ENCODE measurements at regions of chr6 and their contacts with region 1.

Region 1: DNA sequence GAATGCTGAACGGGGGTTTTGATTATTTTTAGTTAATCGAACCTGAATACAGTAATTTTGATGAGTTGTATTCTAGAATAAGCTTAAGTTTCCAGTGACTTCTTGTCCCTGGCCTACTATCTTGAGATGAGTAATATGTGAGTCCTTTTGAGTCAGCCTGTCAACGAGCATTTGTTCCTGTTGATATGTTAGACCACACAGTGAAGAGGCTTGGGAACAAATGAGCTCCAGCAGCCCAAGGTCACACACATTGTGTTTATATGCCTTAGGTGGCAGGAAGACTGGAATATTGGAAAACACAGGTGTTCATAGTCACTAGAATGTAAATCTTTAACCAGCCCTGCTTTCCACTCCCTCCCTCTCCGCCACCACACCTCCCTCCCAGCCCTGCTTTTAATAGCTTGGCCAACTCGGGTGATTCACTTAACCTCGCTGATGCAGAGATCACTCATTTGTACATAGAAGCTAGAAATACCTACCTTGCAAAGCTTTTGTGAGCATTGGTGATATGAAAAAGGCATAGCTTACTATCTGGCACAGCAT is 9.1 kb downstream of the SMPDL3A start:
- DNase-seq: no peak
- ATAC-seq: peak; percentile 93
- H3K4me3 ChIP-seq: no peak overlapping the region
- H3K27ac ChIP-seq: no peak overlapping the region
- H3K4me1 ChIP-seq: no peaks in the 10 kb centered on the region
- H3K27me3 ChIP-seq: no peaks in the 10 kb centered on the region
- CTCF ChIP-seq: no peak
- EP300 ChIP-seq: peak in 1 of 2 experiments; percentile 14; a peak in 2 of 4 replicates
- POLR2A ChIP-seq: no peak
- RAD21 ChIP-seq: no peak

Region 2: DNA sequence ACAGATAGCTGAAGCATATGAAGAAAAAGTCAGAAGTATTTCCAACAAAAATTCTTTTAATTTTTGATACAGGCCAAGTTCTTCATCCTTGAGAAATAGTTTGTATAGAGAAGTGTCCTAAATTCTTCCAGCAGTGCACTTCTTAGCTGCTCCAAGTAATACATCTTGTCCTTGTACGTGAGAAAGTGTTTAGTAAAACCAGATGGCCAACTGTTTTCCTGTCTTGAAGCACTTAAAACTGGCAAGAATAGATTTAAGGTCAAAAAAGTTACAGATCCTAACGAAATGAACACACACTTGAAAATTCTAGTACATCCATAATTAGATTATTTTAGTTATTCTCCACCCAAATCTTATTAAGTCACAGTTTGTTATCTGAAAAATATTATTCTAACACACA is 450.9 kb before region 1 on chr6:
- CTCF ChIA-PET with region 1: no interaction called
- POLR2A ChIA-PET with region 1: no interaction called
- RAD21 ChIA-PET with region 1: no interaction called
- SMC1A ChIA-PET with region 1: no interaction called
- in situ Hi-C with region 1: no loop called
- intact Hi-C with region 1: no loop called
- DNase-seq: no peak
- ATAC-seq: no peak
- H3K4me3 ChIP-seq: no peak overlapping the region
- H3K27ac ChIP-seq: no peak overlapping the region
- H3K4me1 ChIP-seq: no peaks in the 10 kb centered on the region
- H3K27me3 ChIP-seq: no peaks in the 10 kb centered on the region; a peak in 1 of 4 replicates
- CTCF ChIP-seq: no peak
- EP300 ChIP-seq: no peak
- POLR2A ChIP-seq: no peak
- RAD21 ChIP-seq: no peak

Region 3: GRCh38 chr6:122692131-122692598 is 106.0 kb before region 1 on chr6:
- CTCF ChIA-PET with region 1: no interaction called
- POLR2A ChIA-PET with region 1: no interaction called
- RAD21 ChIA-PET with region 1: no interaction called
- SMC1A ChIA-PET with region 1: no interaction called
- in situ Hi-C with region 1: no loop called
- intact Hi-C with region 1: no loop called
- DNase-seq: no peak
- ATAC-seq: no peak
- H3K4me3 ChIP-seq: no peak overlapping the region
- H3K27ac ChIP-seq: no peak overlapping the region
- H3K4me1 ChIP-seq: no peaks in the 10 kb centered on the region
- H3K27me3 ChIP-seq: no peaks in the 10 kb centered on the region
- CTCF ChIP-seq: no peak
- EP300 ChIP-seq: no peak
- POLR2A ChIP-seq: no peak
- RAD21 ChIP-seq: no peak

Region 4: GRCh38 chr6:122709922-122710512 is 88.2 kb before region 1 on chr6:
- CTCF ChIA-PET with region 1: interaction called, 3 read pairs
- POLR2A ChIA-PET with region 1: no interaction called
- RAD21 ChIA-PET with region 1: no interaction called
- SMC1A ChIA-PET with region 1: interaction called, 10 read pairs
- in situ Hi-C with region 1: no loop called
- intact Hi-C with region 1: no loop called
- DNase-seq: peak; percentile 11
- ATAC-seq: peak; percentile 82
- H3K4me3 ChIP-seq: no peak overlapping the region
- H3K27ac ChIP-seq: no peak overlapping the region
- H3K4me1 ChIP-seq: no peaks in the 10 kb centered on the region
- H3K27me3 ChIP-seq: no peaks in the 10 kb centered on the region; a peak in 1 of 4 replicates
- CTCF ChIP-seq: no peak
- EP300 ChIP-seq: peak; percentile 69 to 80; a peak in 3 of 4 replicates
- POLR2A ChIP-seq: no peak
- RAD21 ChIP-seq: no peak

Region 5: DNA sequence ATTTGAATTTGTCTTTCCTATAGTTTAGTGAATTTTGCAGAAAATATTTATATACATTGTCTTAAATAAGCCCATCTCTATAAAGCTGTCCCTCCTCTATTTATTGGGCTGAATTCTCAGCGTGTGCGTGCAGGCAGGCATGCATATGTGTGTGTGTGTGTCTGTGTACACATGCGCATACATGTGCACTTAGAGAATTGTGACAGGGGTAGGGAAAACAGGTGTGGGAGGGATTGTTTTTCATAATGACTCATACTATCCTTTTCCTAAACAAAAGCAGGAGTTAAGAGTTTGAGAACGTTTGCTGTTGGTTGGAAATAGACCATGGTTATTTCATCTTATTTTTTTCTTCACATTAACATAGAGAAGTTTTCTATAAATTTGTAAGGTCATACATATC is 62.0 kb before region 1 on chr6:
- CTCF ChIA-PET with region 1: interaction called, 9 read pairs
- POLR2A ChIA-PET with region 1: no interaction called
- RAD21 ChIA-PET with region 1: interaction called, 22 read pairs
- SMC1A ChIA-PET with region 1: interaction called, 50 read pairs
- in situ Hi-C with region 1: no loop called
- intact Hi-C with region 1: no loop called
- DNase-seq: no peak
- ATAC-seq: no peak
- H3K4me3 ChIP-seq: no peak overlapping the region
- H3K27ac ChIP-seq: no peak overlapping the region
- H3K4me1 ChIP-seq: no peaks in the 10 kb centered on the region
- H3K27me3 ChIP-seq: no peaks in the 10 kb centered on the region
- CTCF ChIP-seq: no peak
- EP300 ChIP-seq: no peak
- POLR2A ChIP-seq: no peak
- RAD21 ChIP-seq: no peak

Region 6: DNA sequence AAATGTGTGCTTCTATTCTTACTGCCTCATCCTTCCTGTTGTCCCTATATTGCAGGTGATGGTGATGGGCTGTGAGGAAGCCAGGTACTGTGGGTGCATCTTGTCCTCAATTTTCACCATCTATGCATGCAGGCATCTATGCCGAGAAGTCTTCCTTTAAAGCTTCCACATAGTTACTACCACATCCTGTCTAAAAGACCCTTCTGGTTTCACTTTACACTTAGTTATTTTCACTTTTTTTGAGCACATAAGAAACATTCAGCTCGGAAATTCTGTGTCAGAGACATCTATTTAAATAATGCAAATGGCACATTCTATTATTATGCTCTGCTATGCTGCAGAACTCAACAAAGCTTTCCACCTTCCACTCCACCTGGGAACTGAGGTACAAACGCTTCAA is 46.8 kb before region 1 on chr6:
- CTCF ChIA-PET with region 1: interaction called, 52 read pairs
- POLR2A ChIA-PET with region 1: interaction called, 13 read pairs
- RAD21 ChIA-PET with region 1: interaction called, 22 read pairs
- SMC1A ChIA-PET with region 1: interaction called, 98 read pairs
- in situ Hi-C with region 1: no loop called
- intact Hi-C with region 1: no loop called
- DNase-seq: no peak
- ATAC-seq: peak; percentile 75
- H3K4me3 ChIP-seq: no peak overlapping the region
- H3K27ac ChIP-seq: no peak overlapping the region
- H3K4me1 ChIP-seq: 0 out of 2 replicates have a peak, but pooled peaks cover 3% of the 10 kb centered on the region
- H3K27me3 ChIP-seq: no peaks in the 10 kb centered on the region
- CTCF ChIP-seq: no peak
- EP300 ChIP-seq: no peak
- POLR2A ChIP-seq: no peak
- RAD21 ChIP-seq: no peak

Region 7: DNA sequence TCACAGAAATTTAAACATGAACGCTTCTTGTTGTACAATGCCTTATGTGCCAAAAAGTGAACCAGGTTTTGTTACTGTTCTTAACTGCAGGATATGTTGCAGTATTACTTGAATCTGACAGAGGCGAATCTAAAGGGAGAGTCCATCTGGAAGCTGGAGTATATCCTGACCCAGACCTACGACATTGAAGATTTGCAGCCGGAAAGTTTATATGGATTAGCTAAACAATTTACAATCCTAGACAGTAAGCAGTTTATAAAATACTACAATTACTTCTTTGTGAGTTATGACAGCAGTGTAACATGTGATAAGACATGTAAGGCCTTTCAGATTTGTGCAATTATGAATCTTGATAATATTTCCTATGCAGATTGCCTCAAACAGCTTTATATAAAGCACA is 10.8 kb after region 1 on chr6:
- CTCF ChIA-PET with region 1: interaction called, 15 read pairs
- POLR2A ChIA-PET with region 1: no interaction called
- RAD21 ChIA-PET with region 1: interaction called, 3 read pairs
- SMC1A ChIA-PET with region 1: interaction called, 6 read pairs
- in situ Hi-C with region 1: no loop called
- intact Hi-C with region 1: no loop called
- DNase-seq: no peak
- ATAC-seq: no peak
- H3K4me3 ChIP-seq: no peak overlapping the region
- H3K27ac ChIP-seq: no peak overlapping the region
- H3K4me1 ChIP-seq: no peaks in the 10 kb centered on the region
- H3K27me3 ChIP-seq: no peaks in the 10 kb centered on the region
- CTCF ChIP-seq: no peak
- EP300 ChIP-seq: no peak
- POLR2A ChIP-seq: no peak
- RAD21 ChIP-seq: no peak

Region 8: DNA sequence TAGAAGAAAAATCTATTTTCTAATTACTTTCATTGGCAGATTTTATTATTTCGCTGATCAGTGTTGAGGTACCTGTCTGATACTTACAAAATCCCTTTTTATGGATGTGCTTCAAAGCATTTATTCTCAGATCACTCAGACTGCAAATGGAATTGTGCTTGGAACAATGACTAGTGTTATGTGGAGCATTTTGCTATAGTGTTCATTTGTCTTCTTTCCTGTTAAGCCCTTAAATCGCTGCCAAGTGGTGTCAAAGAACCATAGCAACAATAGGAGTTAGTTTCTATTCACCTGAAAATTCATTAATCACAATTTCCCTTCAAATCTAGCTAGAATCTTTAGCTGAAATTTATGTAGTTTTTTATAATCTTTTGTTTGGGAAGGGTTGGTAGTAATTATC is 20.7 kb after region 1 on chr6:
- CTCF ChIA-PET with region 1: interaction called, 12 read pairs
- POLR2A ChIA-PET with region 1: interaction called, 3 read pairs
- RAD21 ChIA-PET with region 1: interaction called, 5 read pairs
- SMC1A ChIA-PET with region 1: interaction called, 11 read pairs
- in situ Hi-C with region 1: no loop called
- intact Hi-C with region 1: no loop called
- DNase-seq: no peak
- ATAC-seq: no peak
- H3K4me3 ChIP-seq: no peak overlapping the region
- H3K27ac ChIP-seq: no peak overlapping the region
- H3K4me1 ChIP-seq: no peaks in the 10 kb centered on the region
- H3K27me3 ChIP-seq: no peaks in the 10 kb centered on the region; a peak in 1 of 4 replicates
- CTCF ChIP-seq: no peak
- EP300 ChIP-seq: no peak
- POLR2A ChIP-seq: no peak
- RAD21 ChIP-seq: no peak

Region 9: DNA sequence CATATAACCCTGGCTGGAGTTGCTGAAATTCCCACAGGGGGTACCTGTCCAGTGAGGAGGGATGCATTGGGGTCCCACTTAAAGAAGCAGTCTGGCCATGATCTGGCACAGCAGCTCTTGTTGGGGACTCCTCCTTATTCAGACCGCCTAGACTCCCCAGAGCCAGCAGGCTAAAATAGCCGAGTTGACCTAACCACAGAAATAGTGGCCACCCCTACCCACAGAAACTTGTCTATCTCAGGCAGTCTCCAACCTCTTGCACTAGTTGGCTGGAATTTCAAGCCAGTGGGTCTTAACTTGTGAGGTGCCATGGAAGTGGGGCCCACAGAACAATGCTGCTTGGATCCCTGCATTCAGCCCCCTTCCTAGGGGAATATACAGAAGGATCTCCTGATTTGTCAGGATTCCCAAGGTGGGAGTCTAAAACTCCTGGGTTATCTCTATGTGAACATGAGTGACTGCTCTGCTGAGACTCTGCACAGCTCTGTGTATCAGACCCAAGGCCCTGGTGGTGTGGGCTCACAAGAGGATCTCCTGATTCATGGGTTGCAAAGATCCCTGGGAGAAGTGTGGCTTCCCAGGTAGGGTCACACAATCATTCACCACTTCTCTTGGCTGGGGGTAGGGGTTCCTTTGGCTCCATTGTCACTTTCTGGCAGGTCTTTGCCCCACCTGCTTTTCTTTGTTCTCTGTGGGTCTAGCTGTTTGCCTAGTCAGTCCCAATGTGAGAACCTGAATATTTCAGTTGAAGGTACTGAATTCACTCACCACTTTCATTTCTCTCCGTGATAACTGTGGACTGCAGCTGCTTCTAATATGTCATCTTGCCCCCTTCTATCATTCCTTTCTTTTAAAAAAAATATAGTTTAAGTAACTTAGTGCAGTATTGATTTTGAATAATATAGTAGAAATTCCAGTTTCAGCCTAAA is 132.3 kb after region 1 on chr6:
- CTCF ChIA-PET with region 1: no interaction called
- POLR2A ChIA-PET with region 1: no interaction called
- RAD21 ChIA-PET with region 1: no interaction called
- SMC1A ChIA-PET with region 1: no interaction called
- in situ Hi-C with region 1: no loop called
- intact Hi-C with region 1: loop called (anchors 5 kb)
- DNase-seq: peak; percentile 11
- ATAC-seq: peak; percentile 81
- H3K4me3 ChIP-seq: no peak overlapping the region
- H3K27ac ChIP-seq: no peak overlapping the region
- H3K4me1 ChIP-seq: no peaks in the 10 kb centered on the region
- H3K27me3 ChIP-seq: no peaks in the 10 kb centered on the region
- CTCF ChIP-seq: no peak
- EP300 ChIP-seq: peak; percentile 25 to 53; a peak in 1 of 4 replicates
- POLR2A ChIP-seq: no peak
- RAD21 ChIP-seq: no peak